PC-9 (cell line): ENCODE measurements at regions of chr3 and their contacts with region 1.

Region 1: DNA sequence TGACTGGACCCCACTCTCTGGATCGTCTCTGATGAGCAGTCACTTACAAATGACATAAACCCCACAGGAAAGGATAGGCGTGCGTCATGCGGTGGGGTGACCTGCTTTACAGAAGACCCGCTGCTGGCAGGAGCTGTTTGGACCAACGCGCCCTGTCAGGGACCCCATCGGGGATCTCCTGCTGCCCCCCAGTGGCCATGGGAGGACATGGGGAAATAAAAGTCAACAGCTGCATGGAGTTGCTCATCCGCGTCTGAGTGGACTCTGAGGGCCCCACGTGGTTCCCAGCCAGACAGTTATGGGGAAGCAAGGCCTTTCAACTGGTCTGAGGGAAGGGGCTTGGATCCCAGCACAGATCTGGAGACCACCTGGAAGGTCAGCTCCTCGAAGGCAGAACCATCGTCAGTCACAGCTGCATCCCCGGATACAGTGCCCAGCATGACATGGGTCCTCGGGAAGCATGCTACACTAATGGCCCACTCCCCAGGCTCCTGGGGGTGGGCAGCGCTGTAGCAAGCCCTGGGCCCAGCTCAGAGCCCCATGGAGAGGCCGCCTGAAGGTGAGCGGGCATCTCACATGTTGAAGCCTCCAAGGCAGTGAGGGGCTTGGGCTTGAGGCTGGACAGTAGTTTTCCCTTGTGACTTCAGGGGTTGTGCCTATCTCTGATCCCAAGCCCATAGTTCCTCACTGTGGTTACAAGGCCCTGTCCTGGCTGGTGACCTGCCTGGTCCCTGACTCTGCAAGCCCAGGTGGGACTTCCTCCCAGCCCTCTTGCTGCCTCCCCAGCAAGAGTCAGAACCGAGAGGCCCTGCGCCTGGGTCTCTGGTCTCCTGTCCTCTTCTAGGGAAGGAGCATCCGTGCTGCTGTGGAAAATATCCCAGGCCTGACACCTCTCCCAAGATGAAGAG is 32.3 kb downstream of the PTH1R start:
- DNase-seq: peak; percentile 38 to 79
- H3K4me3 ChIP-seq: no peak overlapping the region
- H3K27ac ChIP-seq: no peak overlapping the region
- H3K4me1 ChIP-seq: no peaks in the 10 kb centered on the region
- H3K27me3 ChIP-seq: no peaks in the 10 kb centered on the region
- CTCF ChIP-seq: peak; percentile 88

Region 2: DNA sequence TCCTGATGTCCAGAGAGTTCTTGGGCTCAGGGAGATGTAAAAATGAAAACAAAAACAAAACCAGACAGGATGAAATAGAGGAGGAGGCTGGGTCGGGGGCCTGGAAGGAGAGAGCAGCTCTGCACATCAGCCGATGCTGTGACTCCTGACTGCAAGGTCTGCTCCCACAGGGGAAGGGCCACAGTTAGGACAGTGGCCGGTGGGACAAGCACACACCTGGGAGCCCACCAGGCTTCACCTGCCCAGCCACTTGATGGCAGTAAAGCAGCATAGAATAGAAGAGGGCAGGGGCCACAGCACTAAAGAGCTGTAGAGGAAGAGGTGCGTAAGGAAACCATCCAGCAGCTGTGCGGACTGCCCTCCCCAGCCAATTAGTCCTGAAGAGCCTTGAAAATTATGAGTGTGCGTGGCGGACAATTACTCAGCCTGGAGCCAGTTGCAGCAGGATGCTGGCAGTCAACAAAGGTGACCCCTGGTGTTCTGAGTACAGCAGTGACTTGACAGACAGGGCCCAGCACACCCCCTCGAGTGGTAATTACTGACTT is 246.1 kb before region 1 on chr3:
- CTCF ChIA-PET with region 1: no interaction called
- POLR2A ChIA-PET with region 1: no interaction called
- intact Hi-C with region 1: loop called (anchors 2 kb)
- DNase-seq: no peak
- H3K4me3 ChIP-seq: no peak overlapping the region
- H3K27ac ChIP-seq: no peak overlapping the region
- H3K4me1 ChIP-seq: peaks cover 28% of the 10 kb centered on the region
- H3K27me3 ChIP-seq: no peaks in the 10 kb centered on the region
- CTCF ChIP-seq: peak; percentile 51; the same call in 1 of the 2 replicates

Region 3: GRCh38 chr3:46705022-46705530 is 204.7 kb before region 1 on chr3:
- CTCF ChIA-PET with region 1: interaction called, 4 read pairs
- POLR2A ChIA-PET with region 1: no interaction called
- intact Hi-C with region 1: loop called (anchors 1 kb)
- DNase-seq: peak; percentile 60 to 78
- H3K4me3 ChIP-seq: no peak overlapping the region
- H3K27ac ChIP-seq: no peak overlapping the region
- H3K4me1 ChIP-seq: peaks cover 18% of the 10 kb centered on the region
- H3K27me3 ChIP-seq: no peaks in the 10 kb centered on the region
- CTCF ChIP-seq: peak; percentile 90

Region 4: GRCh38 chr3:46845791-46846623 is 63.8 kb before region 1 on chr3:
- CTCF ChIA-PET with region 1: no interaction called
- POLR2A ChIA-PET with region 1: no interaction called
- intact Hi-C with region 1: loop called (anchors 2 kb)
- DNase-seq: peak in 1 of 2 experiments; percentile 88
- H3K4me3 ChIP-seq: peak overlapping the region; percentile 59; the same call in 1 of the 2 replicates
- H3K27ac ChIP-seq: no peak overlapping the region
- H3K4me1 ChIP-seq: 0 out of 2 replicates have a peak, but pooled peaks cover 5% of the 10 kb centered on the region
- H3K27me3 ChIP-seq: no peaks in the 10 kb centered on the region
- CTCF ChIP-seq: peak; percentile 48; the same call in 1 of the 2 replicates

Region 5: DNA sequence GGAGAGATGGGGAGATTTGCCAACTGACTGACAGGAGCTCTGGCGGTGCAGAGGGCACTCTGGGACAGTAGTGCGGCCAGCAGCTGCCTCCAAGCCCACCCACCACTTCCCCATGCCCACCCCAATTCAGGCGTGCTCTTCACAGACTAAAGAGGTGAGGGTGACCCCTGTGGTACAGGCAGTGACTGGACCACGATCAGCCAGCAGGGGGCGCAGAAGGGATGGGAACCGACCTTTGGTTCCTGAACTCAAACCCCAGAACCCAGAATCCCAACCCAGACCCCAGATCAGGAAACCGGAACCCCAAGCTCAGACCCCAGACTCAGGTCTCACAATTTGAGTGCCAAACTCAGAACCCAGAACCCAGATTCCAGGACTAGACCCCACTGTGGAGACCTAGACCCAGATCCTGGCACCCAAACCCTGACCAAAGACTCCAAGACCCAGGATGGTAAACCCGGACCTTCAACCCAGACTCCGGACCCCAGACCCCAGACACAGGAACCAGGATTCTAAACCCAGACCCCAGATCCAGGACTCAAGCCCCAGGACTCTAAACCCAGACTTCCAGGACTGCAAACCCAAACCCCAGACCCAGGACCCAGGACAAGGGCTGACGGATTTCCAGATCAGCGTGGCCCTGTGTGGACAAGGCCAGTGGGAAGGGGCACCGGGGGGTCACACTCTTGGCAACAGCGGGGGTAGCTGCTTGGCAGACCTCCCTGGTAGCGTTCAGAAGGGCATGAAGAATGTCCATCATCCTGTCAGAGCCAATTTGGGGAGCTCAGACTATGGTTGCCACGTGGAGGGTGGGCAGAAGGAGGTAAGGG is 42.9 kb before region 1 on chr3:
- CTCF ChIA-PET with region 1: interaction called, 3 read pairs
- POLR2A ChIA-PET with region 1: no interaction called
- intact Hi-C with region 1: loop called (anchors 1 kb)
- DNase-seq: peak in 1 of 2 experiments; percentile 65
- H3K4me3 ChIP-seq: no peak overlapping the region
- H3K27ac ChIP-seq: no peak overlapping the region
- H3K4me1 ChIP-seq: no peaks in the 10 kb centered on the region
- H3K27me3 ChIP-seq: no peaks in the 10 kb centered on the region
- CTCF ChIP-seq: peak; percentile 90

Region 6: GRCh38 chr3:46935168-46935858 is 25.5 kb after region 1 on chr3:
- CTCF ChIA-PET with region 1: no interaction called
- POLR2A ChIA-PET with region 1: no interaction called
- intact Hi-C with region 1: no loop called
- DNase-seq: peak; percentile 86 to 90
- H3K4me3 ChIP-seq: no peak overlapping the region
- H3K27ac ChIP-seq: peak overlapping the region; percentile 53
- H3K4me1 ChIP-seq: peaks cover 63% of the 10 kb centered on the region
- H3K27me3 ChIP-seq: no peaks in the 10 kb centered on the region
- CTCF ChIP-seq: peak; percentile 65

Region 7: DNA sequence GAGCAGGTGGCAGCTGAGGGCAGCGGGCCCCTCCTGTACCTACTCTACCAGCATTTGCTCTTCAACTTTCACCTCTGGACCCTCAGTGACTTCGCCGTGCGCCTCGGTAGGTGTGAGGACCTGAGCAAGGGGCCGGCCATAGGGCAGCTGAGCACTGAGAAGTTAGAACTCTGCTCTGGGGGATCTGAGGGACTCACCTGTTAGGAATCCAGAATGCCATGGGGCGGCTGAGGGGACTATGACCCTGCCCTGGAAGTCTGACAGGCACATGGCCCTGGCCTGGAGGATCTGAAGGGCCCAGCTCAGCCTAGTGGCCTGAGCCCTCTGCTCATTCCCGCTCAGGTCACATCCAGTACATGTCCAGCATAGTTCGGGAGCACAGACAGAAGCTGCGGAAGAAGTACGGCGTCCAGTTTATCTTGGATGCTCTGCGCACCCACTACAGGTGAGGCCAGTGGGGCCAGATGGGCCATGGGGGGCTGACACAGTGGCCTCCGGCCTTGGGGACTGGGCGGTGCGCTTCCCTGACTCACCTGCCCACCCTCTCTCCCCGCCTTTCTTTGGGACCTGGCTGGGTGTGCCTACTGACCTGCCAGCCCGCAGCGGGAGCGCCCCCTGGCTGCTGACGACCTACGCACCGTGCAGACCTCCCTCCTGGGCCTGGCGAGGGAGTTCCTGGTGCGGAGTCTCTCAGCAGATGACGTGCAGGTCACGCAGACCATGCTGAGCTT is 88.5 kb after region 1 on chr3:
- CTCF ChIA-PET with region 1: no interaction called
- POLR2A ChIA-PET with region 1: no interaction called
- intact Hi-C with region 1: loop called (anchors 1 kb)
- DNase-seq: peak; percentile 44 to 75
- H3K4me3 ChIP-seq: no peak overlapping the region
- H3K27ac ChIP-seq: no peak overlapping the region
- H3K4me1 ChIP-seq: no peaks in the 10 kb centered on the region
- H3K27me3 ChIP-seq: no peaks in the 10 kb centered on the region
- CTCF ChIP-seq: peak; percentile 79